ENCODE measurements at regions of chr15 and their contacts with region 1.

Region 1: GRCh38 chr15:99275525-99276128 is 24.3 kb downstream of the LRRC28 start:
- DNase-seq: no peak
- ATAC-seq: no peak
- H3K4me3 Mint-ChIP-seq: no peak overlapping the region
- H3K27ac Mint-ChIP-seq: no peak overlapping the region
- H3K4me1 Mint-ChIP-seq: peaks cover 21% of the 10 kb centered on the region
- H3K27me3 Mint-ChIP-seq: no peaks in the 10 kb centered on the region

Region 2: GRCh38 chr15:99250494-99251435 is 24.9 kb before region 1 on chr15:
- CTCF ChIA-PET with region 1: interaction called, 13 read pairs
- DNase-seq: peak; percentile 98
- ATAC-seq: peak; percentile 99
- H3K4me3 Mint-ChIP-seq: peak overlapping the region; percentile 80
- H3K27ac Mint-ChIP-seq: peak overlapping the region; percentile 77
- H3K4me1 Mint-ChIP-seq: peaks cover 30% of the 10 kb centered on the region
- H3K27me3 Mint-ChIP-seq: no peaks in the 10 kb centered on the region

Region 3: DNA sequence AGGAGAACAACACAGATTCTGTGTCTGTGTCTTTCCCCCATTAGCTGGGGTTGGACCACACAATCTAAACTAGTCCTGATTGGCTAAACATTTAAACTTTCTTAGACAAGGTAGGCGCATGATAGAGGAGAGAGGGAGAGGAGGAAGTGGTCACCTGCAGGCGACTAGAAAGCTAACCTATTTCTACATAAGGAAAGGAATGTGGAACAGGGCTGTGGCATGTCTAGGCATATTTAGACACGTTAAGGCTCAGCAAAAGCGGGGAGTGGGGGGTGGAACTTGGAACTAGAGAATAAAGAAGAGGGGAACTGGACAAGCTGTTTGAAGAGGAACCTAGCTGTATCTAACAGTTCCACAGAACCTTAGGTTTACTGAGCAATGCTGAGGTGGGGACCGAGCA is 11.5 kb before region 1 on chr15:
- CTCF ChIA-PET with region 1: interaction called, 12 read pairs
- DNase-seq: no peak
- ATAC-seq: no peak
- H3K4me3 Mint-ChIP-seq: no peak overlapping the region
- H3K27ac Mint-ChIP-seq: no peak overlapping the region
- H3K4me1 Mint-ChIP-seq: peaks cover 19% of the 10 kb centered on the region
- H3K27me3 Mint-ChIP-seq: no peaks in the 10 kb centered on the region

Region 4: GRCh38 chr15:99733268-99734039 is 457.8 kb after region 1 on chr15 and contains the start of gene LYSMD4:
- CTCF ChIA-PET with region 1: interaction called, 14 read pairs
- DNase-seq: peak; percentile 99
- ATAC-seq: peak; percentile 100
- H3K4me3 Mint-ChIP-seq: peak within 1 kb of the TSS; percentile 75
- H3K27ac Mint-ChIP-seq: peak within 1 kb of the TSS; percentile 85
- H3K4me1 Mint-ChIP-seq: peaks cover 26% of the 10 kb centered on the region
- H3K27me3 Mint-ChIP-seq: no peaks in the 10 kb centered on the region
- total RNA-seq, gene LYSMD4: 8.3 to 8.5 TPM

Region 5: GRCh38 chr15:99755692-99756409 is 480.2 kb after region 1 on chr15:
- CTCF ChIA-PET with region 1: interaction called, 22 read pairs
- DNase-seq: peak; percentile 50
- ATAC-seq: peak; percentile 89
- H3K4me3 Mint-ChIP-seq: no peak overlapping the region
- H3K27ac Mint-ChIP-seq: no peak overlapping the region
- H3K4me1 Mint-ChIP-seq: peaks cover 6% of the 10 kb centered on the region
- H3K27me3 Mint-ChIP-seq: peaks cover 8% of the 10 kb centered on the region

Measured in activated CD8-positive, alpha-beta memory T cell treated with anti-CD3 and anti-CD28 coated beads, Interleukin-2, amount 10 ng/mL, durations not matched to agents 7 days and 5 days (primary cell).